HCT116 (cell line): ENCODE measurements at regions of chr2 and their contacts with region 1.

Region 1: DNA sequence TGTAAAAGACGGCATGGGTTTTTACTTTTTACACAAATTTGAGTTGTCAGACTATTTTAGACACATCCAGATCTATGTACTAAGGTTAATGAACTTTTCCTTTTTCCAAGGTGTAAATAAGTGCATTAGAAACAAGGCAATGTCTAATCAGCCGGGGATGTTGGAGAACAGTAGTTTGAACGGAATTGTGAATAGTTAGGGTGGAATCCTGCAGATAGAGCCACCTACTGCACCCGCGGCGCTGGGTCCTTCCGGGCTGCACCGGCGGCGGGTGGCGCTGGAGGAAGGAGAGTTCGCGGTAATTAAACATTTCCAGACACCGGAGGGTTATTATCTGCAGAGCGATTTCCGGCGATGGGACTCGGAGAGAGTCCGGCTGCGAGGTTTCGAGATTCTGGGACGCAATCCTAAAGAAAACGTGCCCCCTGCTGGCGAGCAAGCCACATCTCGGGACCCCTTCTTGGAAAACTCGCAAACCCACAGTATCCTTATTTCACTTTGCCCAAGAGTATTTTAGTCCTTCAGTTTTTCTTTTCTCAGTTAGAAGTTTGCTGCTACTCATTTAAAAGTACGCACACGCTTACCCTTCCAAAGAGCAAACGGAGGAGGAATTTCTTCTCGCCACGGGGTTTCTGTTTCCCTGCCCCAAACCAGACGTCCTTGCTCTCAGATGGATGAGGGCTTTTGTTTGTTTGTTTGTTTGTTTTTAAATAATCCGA is 4.5 kb upstream of the OSR1 start:
- DNase-seq: peak; percentile 69
- ATAC-seq: peak; percentile 81
- H3K4me3 ChIP-seq: peak overlapping the region; percentile 47 to 55
- H3K27ac ChIP-seq: no peak overlapping the region
- H3K4me1 ChIP-seq: peaks cover 0 to 17% of the 10 kb centered on the region in 2 experiments; a peak in 2 of 4 replicates
- H3K27me3 ChIP-seq: peaks cover 6% of the 10 kb centered on the region; the same call in 1 of the 2 replicates
- CTCF ChIP-seq: peak; percentile 77 to 87 (median 79)
- POLR2A ChIP-seq: no peak
- RAD21 ChIP-seq: peak; percentile 93

Region 2: DNA sequence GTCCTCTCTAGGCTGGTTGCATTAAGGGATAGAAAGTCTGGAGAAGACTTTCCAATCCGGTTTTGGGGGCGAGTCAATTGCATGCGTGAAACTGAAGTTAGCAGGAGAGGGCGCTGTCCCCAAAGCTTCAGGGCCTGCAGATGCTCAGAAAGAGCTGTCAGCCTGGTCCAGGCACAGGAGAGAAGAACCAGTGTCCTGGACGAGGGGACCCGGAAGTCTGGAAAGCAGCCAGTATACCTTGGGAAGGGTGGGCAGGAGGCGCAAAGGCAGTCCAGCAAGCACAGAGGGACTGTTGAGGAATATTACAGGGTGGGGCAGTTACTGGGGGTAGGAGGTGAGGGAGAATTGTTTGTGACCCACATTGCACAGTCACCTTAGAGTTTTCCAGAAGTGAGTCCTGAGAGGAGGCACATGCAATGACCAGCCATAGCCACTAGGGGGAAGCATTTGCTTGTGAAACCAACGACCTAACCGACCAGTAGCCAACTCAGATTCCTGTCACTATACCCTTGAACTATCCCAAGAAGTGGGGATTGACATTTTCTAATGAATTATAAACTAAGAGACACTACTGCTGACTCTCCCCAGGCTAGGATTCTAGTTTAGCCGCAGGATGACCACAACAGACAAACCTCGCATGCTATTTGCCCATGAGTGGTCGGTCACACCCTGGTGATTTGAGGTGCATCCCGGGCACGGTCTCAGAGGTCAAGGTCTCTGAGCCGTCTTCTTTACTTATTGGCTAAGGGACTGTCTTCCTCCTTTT is 975.3 kb before region 1 on chr2:
- CTCF ChIA-PET with region 1: interaction called, 4 read pairs
- POLR2A ChIA-PET with region 1: no interaction called
- RAD21 ChIA-PET with region 1: interaction called in 1 of 2 experiments, 3 read pairs
- intact Hi-C with region 1: loop called (anchors 1 kb)
- DNase-seq: peak; percentile 68
- ATAC-seq: peak; percentile 93
- H3K4me3 ChIP-seq: no peak overlapping the region
- H3K27ac ChIP-seq: 0 out of 2 replicates have a peak overlapping the region, but pooled peaks have one; percentile 11
- H3K4me1 ChIP-seq: no peaks in the 10 kb centered on the region
- H3K27me3 ChIP-seq: peaks cover 20% of the 10 kb centered on the region
- CTCF ChIP-seq: peak; percentile 76 to 87 (median 82)
- POLR2A ChIP-seq: no peak
- RAD21 ChIP-seq: peak; percentile 83

Region 3: DNA sequence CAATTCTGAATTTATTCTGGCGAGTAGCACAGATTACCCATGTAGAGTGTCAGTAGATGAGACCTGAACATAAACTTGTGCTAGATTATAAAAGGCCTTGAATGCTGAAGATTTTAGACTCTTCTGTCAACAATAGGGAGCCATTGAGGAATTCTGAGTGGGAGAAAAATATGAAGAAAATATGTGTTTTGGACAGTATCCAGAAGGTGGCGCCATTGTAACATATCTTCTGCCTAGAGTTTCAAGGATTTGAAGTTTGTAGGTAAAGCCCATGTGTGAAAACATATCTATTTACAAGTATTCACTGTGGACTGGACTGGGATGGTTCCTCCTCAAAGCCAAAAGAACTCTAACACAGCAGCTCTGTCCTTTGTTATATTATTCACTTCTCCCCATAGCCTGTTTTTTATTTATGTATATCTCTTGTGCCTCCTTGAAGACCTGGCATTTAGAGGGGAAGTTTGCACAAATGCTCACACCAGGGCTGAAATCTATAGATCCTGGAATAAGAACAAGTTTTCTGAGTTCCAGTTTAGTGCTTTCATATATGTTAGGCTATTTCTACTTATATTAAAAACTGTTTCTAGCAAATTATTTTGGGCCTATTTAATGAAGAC is 927.4 kb before region 1 on chr2:
- CTCF ChIA-PET with region 1: no interaction called
- POLR2A ChIA-PET with region 1: no interaction called
- RAD21 ChIA-PET with region 1: no interaction called
- intact Hi-C with region 1: loop called (anchors 2 kb)
- DNase-seq: peak; percentile 52
- ATAC-seq: peak; percentile 76
- H3K4me3 ChIP-seq: no peak overlapping the region
- H3K27ac ChIP-seq: no peak overlapping the region
- H3K4me1 ChIP-seq: no peaks in the 10 kb centered on the region
- H3K27me3 ChIP-seq: peaks cover 30% of the 10 kb centered on the region; the same call in 1 of the 2 replicates
- CTCF ChIP-seq: peak; percentile 38 to 71 (median 54); a peak in 5 of 6 replicates
- POLR2A ChIP-seq: no peak
- RAD21 ChIP-seq: peak; percentile 77

Region 4: DNA sequence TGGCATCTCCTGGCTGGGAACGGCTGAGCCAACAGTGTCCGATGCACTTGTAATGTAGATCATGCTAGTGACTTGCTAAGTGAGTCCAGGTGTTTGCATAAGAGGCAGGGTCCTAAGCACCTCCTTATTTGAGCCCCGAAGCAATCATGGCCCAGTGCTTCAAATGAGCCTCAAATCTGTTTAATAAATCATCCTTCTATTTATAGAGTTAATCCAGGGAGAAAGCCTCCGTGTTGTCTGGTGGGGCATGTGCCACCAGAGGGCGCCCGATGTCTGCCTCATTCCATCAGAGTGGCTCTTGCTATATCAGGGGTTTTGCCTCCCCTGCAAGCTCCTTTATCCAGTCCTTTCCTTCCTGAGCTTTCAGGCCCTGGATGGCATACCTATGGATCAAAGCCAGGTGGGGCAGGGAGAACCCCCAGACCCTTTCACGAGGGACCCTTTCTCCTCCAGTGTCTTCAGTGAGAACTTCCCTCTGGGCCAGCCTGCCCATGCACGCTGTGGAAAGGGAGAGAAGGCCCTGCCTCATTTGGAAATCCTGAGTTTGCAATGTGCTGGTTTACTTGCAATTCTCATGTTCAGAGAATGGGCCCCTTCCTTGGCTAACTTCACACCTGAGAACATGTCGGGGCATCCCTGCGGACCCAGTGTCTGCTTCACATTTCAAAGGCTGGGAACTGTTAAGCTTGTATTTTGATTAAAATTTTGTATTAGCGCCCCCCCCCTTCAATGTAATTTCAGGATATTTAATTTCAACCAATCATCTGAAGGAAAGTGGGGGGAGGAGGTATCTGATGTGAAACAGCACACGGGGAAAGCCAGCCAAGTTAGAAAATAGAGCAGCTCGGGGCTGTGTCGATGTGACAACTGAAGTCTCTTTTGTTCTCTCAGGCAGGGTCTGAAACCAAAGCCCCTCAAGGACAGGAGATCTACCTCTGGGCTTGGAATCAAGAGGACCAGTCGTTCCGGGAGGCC is 842.2 kb before region 1 on chr2:
- CTCF ChIA-PET with region 1: no interaction called
- POLR2A ChIA-PET with region 1: no interaction called
- RAD21 ChIA-PET with region 1: no interaction called
- intact Hi-C with region 1: loop called (anchors 1 kb)
- DNase-seq: peak; percentile 37
- ATAC-seq: peak; percentile 97
- H3K4me3 ChIP-seq: no peak overlapping the region
- H3K27ac ChIP-seq: no peak overlapping the region
- H3K4me1 ChIP-seq: no peaks in the 10 kb centered on the region
- H3K27me3 ChIP-seq: peaks cover 11% of the 10 kb centered on the region; the same call in 1 of the 2 replicates
- CTCF ChIP-seq: peak; percentile 67 to 91 (median 84)
- POLR2A ChIP-seq: no peak
- RAD21 ChIP-seq: peak; percentile 91

Region 5: DNA sequence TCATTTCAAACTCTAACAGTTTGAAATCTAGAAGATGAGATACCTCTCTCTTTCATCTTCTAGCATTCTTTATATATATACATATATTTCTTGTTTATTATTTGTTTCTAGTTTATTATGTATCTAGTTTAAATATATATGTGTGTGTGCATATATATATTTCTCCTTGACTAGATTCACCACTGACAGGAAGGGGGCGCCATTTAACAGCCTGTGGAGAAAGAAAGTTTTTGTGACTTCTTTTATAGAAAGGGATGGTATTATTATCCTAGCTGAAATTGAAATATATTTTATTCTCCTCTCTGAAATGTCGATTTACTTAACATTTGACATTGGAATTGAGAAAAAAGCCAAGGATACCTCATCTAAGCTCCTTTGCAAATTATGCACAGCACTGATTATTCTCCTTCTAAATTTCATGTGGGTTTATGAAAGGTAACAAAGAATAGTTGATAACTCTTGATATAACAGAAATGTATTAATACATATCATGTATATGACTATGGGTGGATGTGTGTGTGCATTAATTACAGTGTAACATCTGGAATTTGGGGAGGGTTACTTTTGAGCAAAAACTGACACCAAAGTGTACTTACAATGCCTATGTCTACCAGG is 612.9 kb before region 1 on chr2:
- CTCF ChIA-PET with region 1: interaction called, 4 read pairs
- POLR2A ChIA-PET with region 1: no interaction called
- RAD21 ChIA-PET with region 1: no interaction called
- intact Hi-C with region 1: loop called (anchors 1 kb)
- DNase-seq: peak; percentile 12
- ATAC-seq: peak; percentile 53; the same call in 1 of the 2 replicates
- H3K4me3 ChIP-seq: no peak overlapping the region
- H3K27ac ChIP-seq: no peak overlapping the region
- H3K4me1 ChIP-seq: no peaks in the 10 kb centered on the region
- H3K27me3 ChIP-seq: peaks cover 5% of the 10 kb centered on the region; the same call in 1 of the 2 replicates
- CTCF ChIP-seq: peak; percentile 67 to 75 (median 74); a peak in 5 of 6 replicates
- POLR2A ChIP-seq: no peak
- RAD21 ChIP-seq: peak; percentile 88

Region 6: GRCh38 chr2:18883616-18884456 is 479.1 kb before region 1 on chr2:
- CTCF ChIA-PET with region 1: no interaction called
- POLR2A ChIA-PET with region 1: no interaction called
- RAD21 ChIA-PET with region 1: no interaction called
- intact Hi-C with region 1: loop called (anchors 1 kb)
- DNase-seq: peak; percentile 7
- ATAC-seq: peak; percentile 54
- H3K4me3 ChIP-seq: no peak overlapping the region
- H3K27ac ChIP-seq: no peak overlapping the region
- H3K4me1 ChIP-seq: no peaks in the 10 kb centered on the region
- H3K27me3 ChIP-seq: no peaks in the 10 kb centered on the region
- CTCF ChIP-seq: peak; percentile 50 to 66 (median 56); a peak in 5 of 6 replicates
- POLR2A ChIP-seq: no peak
- RAD21 ChIP-seq: peak; percentile 75

Region 7: DNA sequence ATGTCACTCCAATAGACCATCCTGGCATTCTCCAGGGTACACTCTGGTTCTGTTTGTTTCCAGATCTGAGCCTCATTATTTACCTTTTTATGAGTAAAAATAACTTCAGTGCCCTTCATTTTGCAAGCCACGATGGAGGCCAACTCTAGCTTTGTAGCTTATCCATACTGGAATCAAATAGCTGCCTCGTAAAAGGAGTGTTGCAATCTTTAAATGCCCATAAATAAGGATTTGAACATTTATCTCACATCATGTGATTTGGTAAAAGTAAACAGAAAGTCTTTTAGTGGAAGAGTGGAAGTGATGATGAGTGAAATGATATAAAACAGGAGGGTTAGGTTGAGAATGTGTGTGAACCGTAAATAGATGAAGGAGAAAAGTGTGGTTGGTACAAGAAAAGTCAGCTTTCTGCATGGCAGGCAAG is 353.4 kb before region 1 on chr2:
- CTCF ChIA-PET with region 1: no interaction called
- POLR2A ChIA-PET with region 1: no interaction called
- RAD21 ChIA-PET with region 1: interaction called in 1 of 2 experiments, 10 read pairs
- intact Hi-C with region 1: no loop called
- DNase-seq: no peak
- ATAC-seq: no peak
- H3K4me3 ChIP-seq: no peak overlapping the region
- H3K27ac ChIP-seq: no peak overlapping the region
- H3K4me1 ChIP-seq: no peaks in the 10 kb centered on the region
- H3K27me3 ChIP-seq: no peaks in the 10 kb centered on the region
- CTCF ChIP-seq: no peak
- POLR2A ChIP-seq: no peak
- RAD21 ChIP-seq: no peak